ENCODE measurements at regions of chr3 and their contacts with region 1.

Region 1: GRCh38 chr3:51198477-51198876 is 186.6 kb upstream of the MANF start:
- DNase-seq: no peak
- H3K4me3 Mint-ChIP-seq: no peak overlapping the region
- H3K27ac Mint-ChIP-seq: no peak overlapping the region
- H3K4me1 Mint-ChIP-seq: no peaks in the 10 kb centered on the region
- H3K27me3 Mint-ChIP-seq: no peaks in the 10 kb centered on the region

Region 2: GRCh38 chr3:51141573-51141972 is 56.9 kb before region 1 on chr3:
- intact Hi-C with region 1: no loop called
- DNase-seq: no peak
- H3K4me3 Mint-ChIP-seq: no peak overlapping the region
- H3K27ac Mint-ChIP-seq: no peak overlapping the region
- H3K4me1 Mint-ChIP-seq: no peaks in the 10 kb centered on the region
- H3K27me3 Mint-ChIP-seq: no peaks in the 10 kb centered on the region

Region 3: GRCh38 chr3:51176923-51177322 is 21.6 kb before region 1 on chr3:
- intact Hi-C with region 1: loop called (anchors 1 kb)
- DNase-seq: no peak
- H3K4me3 Mint-ChIP-seq: no peak overlapping the region
- H3K27ac Mint-ChIP-seq: no peak overlapping the region
- H3K4me1 Mint-ChIP-seq: no peaks in the 10 kb centered on the region
- H3K27me3 Mint-ChIP-seq: no peaks in the 10 kb centered on the region

Region 4: GRCh38 chr3:52001443-52001974 is 803.0 kb after region 1 on chr3:
- intact Hi-C with region 1: no loop called
- DNase-seq: peak; percentile 77
- H3K4me3 Mint-ChIP-seq: no peak overlapping the region
- H3K27ac Mint-ChIP-seq: no peak overlapping the region
- H3K4me1 Mint-ChIP-seq: peaks cover 13% of the 10 kb centered on the region
- H3K27me3 Mint-ChIP-seq: peaks cover 17% of the 10 kb centered on the region